Breast epithelium (tissue), 4 donors: ENCODE measurements at regions of chr3 and their contacts with region 1.

Region 1: DNA sequence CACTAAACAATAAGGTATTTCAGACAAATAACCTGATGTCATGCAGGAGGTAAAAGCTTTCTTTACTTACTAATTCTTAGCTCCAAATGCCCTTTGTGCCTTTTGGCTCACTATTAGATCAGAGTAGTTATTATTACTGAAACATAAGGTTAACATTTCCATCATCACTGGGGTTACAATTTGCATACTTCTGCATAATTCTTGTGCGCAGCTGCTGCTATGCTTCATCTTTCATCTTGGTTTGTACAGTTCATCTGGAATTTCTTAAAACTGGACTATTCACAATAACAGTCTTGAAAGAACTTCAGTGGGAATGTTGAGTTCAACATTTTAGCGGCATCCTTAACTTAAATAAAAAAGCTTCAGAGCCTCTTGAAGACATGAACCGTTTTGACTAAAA is 383.2 kb upstream of the ADAMTS9 start:
- DNase-seq: no peak
- H3K4me3 ChIP-seq: no peak overlapping the region
- H3K27ac ChIP-seq: no peak overlapping the region
- H3K4me1 ChIP-seq: no peaks in the 10 kb centered on the region
- H3K27me3 ChIP-seq: no peaks in the 10 kb centered on the region
- CTCF ChIP-seq: no peak
- POLR2A ChIP-seq: no peak

Region 2: DNA sequence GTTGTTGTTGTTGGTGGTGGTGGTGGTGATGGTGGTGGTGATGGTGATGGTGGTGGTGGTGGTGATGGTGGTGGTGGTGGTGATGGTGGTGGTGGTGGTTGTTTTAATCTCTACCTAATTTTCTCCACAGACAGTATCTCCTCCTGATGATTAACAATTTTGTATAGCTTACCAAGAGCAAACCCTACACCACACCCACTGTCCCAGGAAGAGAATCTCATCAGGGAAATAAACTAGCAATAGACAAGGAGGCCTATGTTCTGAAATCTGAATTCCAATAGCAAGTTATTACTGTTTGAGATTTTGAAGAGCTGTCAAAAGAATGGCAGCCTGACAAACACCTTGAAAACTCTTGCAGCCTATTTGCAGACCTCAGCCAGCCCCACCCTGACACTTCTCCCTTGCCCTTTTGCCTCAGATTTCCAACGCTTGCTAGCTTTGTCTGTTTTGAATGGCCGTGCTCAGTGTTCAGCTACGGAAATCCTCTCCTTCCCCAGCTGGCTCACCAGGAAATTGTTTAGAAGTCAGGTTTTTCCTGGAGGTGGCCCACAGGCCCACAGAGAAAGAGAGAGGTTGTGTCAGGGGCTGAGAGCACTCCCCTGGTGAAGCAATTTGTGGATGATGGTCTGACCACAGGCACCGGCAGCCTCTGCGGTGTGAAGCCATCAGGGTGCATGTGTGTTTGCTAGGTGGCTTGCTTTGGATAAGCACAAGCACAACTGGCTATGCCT is 866.1 kb after region 1 on chr3:
- intact Hi-C with region 1: loop called (anchors 5 kb)
- DNase-seq: no peak
- H3K4me3 ChIP-seq: no peak overlapping the region
- H3K27ac ChIP-seq: peak overlapping the region; percentile 56 to 64
- H3K4me1 ChIP-seq: no peaks in the 10 kb centered on the region
- H3K27me3 ChIP-seq: no peaks in the 10 kb centered on the region
- CTCF ChIP-seq: no peak
- POLR2A ChIP-seq: no peak